Ascending aorta (tissue), 2 donors: ENCODE measurements at regions of chr13 and their contacts with region 1.

Region 1: DNA sequence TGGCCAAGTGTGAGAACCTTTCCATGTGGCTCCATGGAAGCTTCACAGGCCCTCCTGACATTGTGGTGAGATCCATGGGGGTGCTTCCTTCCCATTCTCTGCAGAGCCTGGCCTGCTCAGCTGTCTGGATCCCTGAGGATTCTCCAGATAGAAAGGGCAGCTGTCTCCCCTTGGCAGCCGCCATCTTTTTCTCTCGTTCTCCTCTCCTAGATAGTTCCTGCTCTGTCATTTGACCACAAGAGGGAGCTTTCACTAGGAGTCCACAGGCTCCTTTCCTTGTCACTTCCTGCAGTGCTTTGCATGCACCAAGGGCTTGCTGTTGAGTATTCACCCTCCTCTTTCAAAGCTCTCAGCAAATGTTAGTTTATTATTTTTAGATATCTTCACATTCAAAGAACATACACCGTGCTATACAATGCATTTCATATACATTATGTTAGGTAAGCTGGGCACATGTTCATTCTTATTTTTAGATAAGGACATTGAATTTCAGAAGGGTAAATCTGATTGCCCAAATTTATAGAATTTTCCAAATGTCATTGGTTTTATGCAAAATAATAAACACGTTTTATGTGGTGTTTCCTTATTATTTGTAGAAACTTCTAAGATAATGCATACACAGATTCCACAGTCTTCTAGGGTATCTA is 133.2 kb downstream of the FRY start:
- DNase-seq: no peak
- H3K4me3 ChIP-seq: no peak overlapping the region
- H3K27ac ChIP-seq: peak overlapping the region; percentile 37 to 71
- H3K4me1 ChIP-seq: peaks cover 0 to 10% of the 10 kb centered on the region in 2 donors
- H3K27me3 ChIP-seq: no peaks in the 10 kb centered on the region
- CTCF ChIP-seq: peak in 2 of 3 experiments; percentile 30 to 32

Region 2: GRCh38 chr13:32205431-32206096 is 40.8 kb after region 1 on chr13:
- intact Hi-C with region 1: loop called (anchors 5 kb)
- DNase-seq: no peak
- H3K4me3 ChIP-seq: no peak overlapping the region
- H3K27ac ChIP-seq: no peak overlapping the region
- H3K4me1 ChIP-seq: peaks cover 0 to 12% of the 10 kb centered on the region in 2 donors
- H3K27me3 ChIP-seq: no peaks in the 10 kb centered on the region
- CTCF ChIP-seq: no peak

Region 3: GRCh38 chr13:32932376-32932775 is 767.6 kb after region 1 on chr13:
- intact Hi-C with region 1: no loop called
- DNase-seq: no peak
- H3K4me3 ChIP-seq: no peak overlapping the region
- H3K27ac ChIP-seq: no peak overlapping the region
- H3K4me1 ChIP-seq: no peaks in the 10 kb centered on the region
- H3K27me3 ChIP-seq: no peaks in the 10 kb centered on the region
- CTCF ChIP-seq: no peak